K562 (cell line): ENCODE measurements at regions of chr22 and their contacts with region 1.

Region 1: DNA sequence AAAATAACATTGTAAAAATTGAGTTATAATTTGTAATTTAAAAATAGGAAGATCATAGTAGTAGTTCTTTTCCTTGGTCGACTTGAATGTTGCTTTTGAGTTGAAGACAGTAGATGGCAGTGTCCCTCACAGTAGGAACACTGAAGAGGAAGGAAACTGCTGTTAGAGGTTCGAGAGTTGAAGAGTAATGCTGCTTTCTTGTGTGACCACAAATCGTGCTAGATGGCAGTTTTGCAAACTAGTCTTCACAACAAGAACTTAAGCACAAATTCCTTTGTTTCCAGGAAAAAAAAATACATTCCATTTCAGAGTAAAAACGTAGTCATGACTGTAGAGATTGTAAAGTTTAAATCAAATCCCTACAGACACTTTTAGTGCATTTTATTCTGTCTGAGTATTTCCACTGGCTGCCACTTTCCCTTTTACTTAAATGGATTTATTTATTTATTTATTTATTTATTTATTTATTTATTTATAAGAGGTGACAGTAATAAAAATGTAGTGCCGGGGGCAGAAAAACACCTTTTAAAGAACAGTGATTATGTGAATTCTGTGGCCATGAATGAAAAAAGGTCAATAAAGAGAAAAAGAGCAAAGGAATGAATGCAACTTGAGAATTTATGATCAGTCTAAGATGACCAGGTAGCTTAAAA is 54.6 kb downstream of the SPECC1L start:
- DNase-seq: peak; percentile 13 to 37 (median 16)
- ATAC-seq: no peak; the same call in 2 of the 3 replicates
- H3K4me3 ChIP-seq: no peak overlapping the region
- H3K27ac ChIP-seq: no peak overlapping the region
- H3K4me1 ChIP-seq: no peaks in the 10 kb centered on the region; a peak in 1 of 5 replicates
- H3K27me3 ChIP-seq: no peaks in the 10 kb centered on the region
- CTCF ChIP-seq: peak; percentile 20 to 59 (median 34); a peak in 3 of 6 replicates
- EP300 ChIP-seq: no peak
- POLR2A ChIP-seq: no peak
- RAD21 ChIP-seq: peak; percentile 67 to 68

Region 2: DNA sequence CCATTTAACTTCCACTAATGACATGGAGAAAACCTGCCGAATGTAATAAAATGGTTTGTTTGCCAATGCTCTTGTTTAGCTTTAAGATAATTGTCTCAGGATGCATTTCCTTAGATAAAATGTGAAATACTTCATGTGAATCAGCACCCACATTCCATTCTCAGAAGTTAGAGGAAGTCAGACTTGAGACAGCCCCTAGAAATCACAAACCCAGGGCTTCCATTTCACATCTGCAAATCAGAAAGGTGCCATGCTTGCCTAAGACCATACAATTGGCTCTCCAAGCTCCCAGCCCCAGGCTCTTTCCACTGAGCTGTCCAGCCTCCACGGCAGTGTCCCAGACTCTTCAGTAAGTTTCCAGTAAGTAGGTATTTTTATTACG is 66.6 kb after region 1 on chr22:
- CTCF ChIA-PET with region 1: no interaction called
- POLR2A ChIA-PET with region 1: no interaction called
- in situ Hi-C with region 1: no loop called
- intact Hi-C with region 1: loop called (anchors 10 kb)
- DNase-seq: no peak
- ATAC-seq: no peak
- H3K4me3 ChIP-seq: no peak overlapping the region
- H3K27ac ChIP-seq: no peak overlapping the region
- H3K4me1 ChIP-seq: peaks cover 0 to 13% of the 10 kb centered on the region in 2 experiments; a peak in 3 of 5 replicates
- H3K27me3 ChIP-seq: no peaks in the 10 kb centered on the region
- CTCF ChIP-seq: no peak
- EP300 ChIP-seq: no peak
- POLR2A ChIP-seq: no peak
- RAD21 ChIP-seq: no peak

Region 3: GRCh38 chr22:24410110-24410856 is 85.1 kb after region 1 on chr22:
- CTCF ChIA-PET with region 1: no interaction called
- POLR2A ChIA-PET with region 1: no interaction called
- in situ Hi-C with region 1: no loop called
- intact Hi-C with region 1: no loop called
- DNase-seq: no peak
- ATAC-seq: no peak
- H3K4me3 ChIP-seq: no peak overlapping the region
- H3K27ac ChIP-seq: no peak overlapping the region
- H3K4me1 ChIP-seq: peaks cover 10 to 16% of the 10 kb centered on the region in 2 experiments; a peak in 4 of 5 replicates
- H3K27me3 ChIP-seq: no peaks in the 10 kb centered on the region
- CTCF ChIP-seq: no peak
- EP300 ChIP-seq: no peak
- POLR2A ChIP-seq: no peak
- RAD21 ChIP-seq: no peak